HEK293 (cell line): ENCODE measurements at regions of chr2 and their contacts with region 1.

Region 1: DNA sequence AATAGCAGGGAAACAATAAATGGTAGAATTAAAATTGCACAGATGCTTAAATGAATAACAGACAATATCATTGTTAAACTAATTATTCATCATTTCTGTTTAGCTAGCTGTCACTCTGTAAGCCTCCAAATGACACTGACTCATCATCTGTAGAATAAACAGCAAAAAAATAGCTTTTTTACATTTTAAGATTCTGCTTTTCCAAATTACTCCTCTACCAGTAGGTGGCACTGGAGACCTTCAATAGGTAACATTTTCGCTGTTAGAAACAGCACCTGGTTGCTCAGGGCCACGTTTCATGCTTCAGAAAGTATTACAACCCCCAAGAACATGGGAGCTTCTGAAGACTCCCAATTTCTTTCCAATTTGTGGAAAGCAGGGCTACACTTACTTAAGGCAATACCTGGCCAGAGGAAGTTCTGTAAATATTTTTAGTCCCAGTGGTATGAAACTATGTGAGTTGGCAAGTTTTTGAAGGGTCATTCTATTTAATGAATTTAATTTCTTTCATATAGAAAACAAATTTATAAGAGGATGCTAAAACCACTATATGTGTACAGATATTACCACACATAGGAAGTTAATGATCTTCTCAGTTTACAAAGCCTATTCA is 45.4 kb downstream of the TTN start:
- H3K4me3 ChIP-seq: no peak overlapping the region
- H3K27ac ChIP-seq: no peak overlapping the region
- H3K4me1 ChIP-seq: no peaks in the 10 kb centered on the region
- CTCF ChIP-seq: peak; percentile 41; the same call in 1 of the 2 replicates

Region 2: GRCh38 chr2:178650554-178650953 is 111.3 kb before region 1 on chr2:
- CTCF ChIA-PET with region 1: no interaction called
- POLR2A ChIA-PET with region 1: no interaction called
- H3K4me3 ChIP-seq: no peak overlapping the region
- H3K27ac ChIP-seq: no peak overlapping the region
- H3K4me1 ChIP-seq: no peaks in the 10 kb centered on the region
- CTCF ChIP-seq: no peak

Region 3: GRCh38 chr2:178782236-178782635 is 20.4 kb after region 1 on chr2:
- CTCF ChIA-PET with region 1: interaction called, 10 read pairs
- POLR2A ChIA-PET with region 1: no interaction called
- H3K4me3 ChIP-seq: no peak overlapping the region
- H3K27ac ChIP-seq: no peak overlapping the region
- H3K4me1 ChIP-seq: no peaks in the 10 kb centered on the region
- CTCF ChIP-seq: no peak

Region 4: DNA sequence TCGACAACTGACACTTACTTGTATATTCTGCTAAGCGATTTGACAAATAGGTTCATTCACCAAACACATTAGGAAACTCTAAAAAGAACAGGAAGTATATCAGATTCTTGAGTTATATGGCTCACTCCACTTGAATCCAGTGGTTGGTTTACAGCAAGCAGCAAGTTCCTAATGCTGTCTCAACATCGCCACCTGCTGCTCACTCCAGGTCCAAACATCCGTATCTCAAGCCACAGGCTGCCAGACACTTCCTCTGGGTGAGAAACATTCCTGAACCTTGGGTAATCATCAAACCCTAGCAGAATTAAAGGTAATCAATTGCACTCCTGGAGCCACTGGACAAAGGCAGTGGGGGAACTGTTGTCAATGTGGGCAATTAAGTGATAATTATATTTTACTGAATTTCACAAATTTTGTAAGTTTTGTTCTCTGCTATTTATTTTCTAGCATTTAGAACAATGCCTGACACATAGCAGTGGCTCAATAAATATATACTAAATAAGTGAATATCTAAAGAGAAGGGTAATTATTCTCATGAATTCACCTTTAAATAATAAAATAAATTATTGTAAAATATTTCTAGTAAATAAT is 152.5 kb after region 1 on chr2:
- CTCF ChIA-PET with region 1: interaction called, 14 read pairs
- POLR2A ChIA-PET with region 1: no interaction called
- H3K4me3 ChIP-seq: no peak overlapping the region
- H3K27ac ChIP-seq: no peak overlapping the region
- H3K4me1 ChIP-seq: no peaks in the 10 kb centered on the region
- CTCF ChIP-seq: peak; percentile 27

Region 5: GRCh38 chr2:179106676-179107428 is 345.0 kb after region 1 on chr2:
- CTCF ChIA-PET with region 1: no interaction called
- POLR2A ChIA-PET with region 1: no interaction called
- H3K4me3 ChIP-seq: no peak overlapping the region
- H3K27ac ChIP-seq: no peak overlapping the region
- H3K4me1 ChIP-seq: peaks cover 6% of the 10 kb centered on the region
- CTCF ChIP-seq: no peak